ENCODE measurements at regions of chr3 and their contacts with region 1.

Region 1: DNA sequence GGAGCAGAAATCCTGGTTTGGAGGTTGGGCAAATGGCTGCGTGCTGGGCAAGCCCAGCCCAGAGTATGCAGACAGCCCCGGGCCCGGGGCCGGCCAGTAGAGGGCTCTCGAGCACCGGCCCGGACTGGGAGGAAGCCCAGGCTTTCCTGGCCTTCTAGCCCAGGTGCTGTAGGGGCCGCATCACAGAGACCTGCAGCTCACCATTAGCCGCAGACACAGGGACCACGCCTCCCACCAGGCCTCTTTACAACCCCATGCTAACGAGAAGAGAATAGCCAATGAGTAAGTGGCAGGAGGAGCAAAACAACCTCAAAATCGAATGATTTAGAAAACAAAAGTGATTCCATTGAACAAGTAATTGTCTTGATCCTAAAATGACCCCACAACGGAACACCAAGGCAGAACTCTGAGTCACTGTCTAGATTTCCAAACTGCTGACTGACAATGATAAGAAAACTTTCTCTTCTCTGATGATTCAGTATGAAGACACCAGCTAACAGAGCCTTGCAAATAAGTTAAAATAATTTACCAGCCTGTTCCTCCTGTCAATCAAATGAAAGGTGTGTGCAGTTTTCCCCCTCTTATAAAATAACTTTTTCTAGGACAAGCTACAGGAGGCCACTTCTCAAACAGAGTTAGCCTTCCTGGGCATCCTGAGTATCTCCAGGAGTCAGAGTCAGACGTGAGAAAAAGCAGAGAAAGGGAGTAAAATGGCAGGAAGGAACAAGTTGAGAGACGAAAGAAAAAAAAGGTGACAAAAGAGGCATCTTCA is 102.2 kb downstream of the DGKG start:
- DNase-seq: peak; percentile 75

Region 2: DNA sequence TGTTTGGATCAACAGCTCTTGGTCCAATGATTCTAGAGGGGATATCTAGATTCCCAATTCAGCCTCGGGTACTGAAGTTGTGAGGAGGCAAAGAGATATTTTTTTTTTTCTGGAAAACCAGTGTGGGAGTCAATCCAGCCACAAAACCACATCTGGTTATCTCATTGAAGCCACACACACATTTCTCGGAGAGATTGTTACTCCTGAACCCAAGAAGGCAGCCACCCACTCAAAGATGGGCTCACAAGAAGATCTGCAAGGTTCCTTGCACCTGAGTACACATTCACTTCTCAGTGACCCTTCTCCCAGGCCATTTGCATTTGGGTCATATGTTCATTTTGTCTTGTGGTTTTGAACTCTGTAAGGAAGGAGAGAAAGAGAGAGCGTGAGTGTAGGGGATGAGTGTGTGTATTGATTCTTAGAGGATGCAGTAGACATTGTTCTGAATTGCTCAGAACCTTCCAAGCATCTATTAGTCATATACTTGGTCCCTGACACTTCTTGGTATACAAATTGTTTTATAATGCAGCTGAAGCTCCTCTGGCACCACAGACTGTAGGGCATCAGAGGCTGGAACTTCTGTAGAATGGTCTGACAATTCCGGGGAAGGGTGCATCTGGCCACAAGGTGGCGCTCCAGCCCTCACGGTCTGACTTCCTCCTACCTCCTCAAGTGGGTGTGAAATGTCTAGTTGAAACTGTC is 282.7 kb before region 1 on chr3:
- CTCF ChIA-PET with region 1: interaction called, 12 read pairs
- POLR2A ChIA-PET with region 1: no interaction called
- DNase-seq: peak; percentile 65

Region 3: GRCh38 chr3:186142393-186142932 is 117.3 kb before region 1 on chr3:
- CTCF ChIA-PET with region 1: no interaction called
- POLR2A ChIA-PET with region 1: no interaction called
- DNase-seq: no peak

Region 4: DNA sequence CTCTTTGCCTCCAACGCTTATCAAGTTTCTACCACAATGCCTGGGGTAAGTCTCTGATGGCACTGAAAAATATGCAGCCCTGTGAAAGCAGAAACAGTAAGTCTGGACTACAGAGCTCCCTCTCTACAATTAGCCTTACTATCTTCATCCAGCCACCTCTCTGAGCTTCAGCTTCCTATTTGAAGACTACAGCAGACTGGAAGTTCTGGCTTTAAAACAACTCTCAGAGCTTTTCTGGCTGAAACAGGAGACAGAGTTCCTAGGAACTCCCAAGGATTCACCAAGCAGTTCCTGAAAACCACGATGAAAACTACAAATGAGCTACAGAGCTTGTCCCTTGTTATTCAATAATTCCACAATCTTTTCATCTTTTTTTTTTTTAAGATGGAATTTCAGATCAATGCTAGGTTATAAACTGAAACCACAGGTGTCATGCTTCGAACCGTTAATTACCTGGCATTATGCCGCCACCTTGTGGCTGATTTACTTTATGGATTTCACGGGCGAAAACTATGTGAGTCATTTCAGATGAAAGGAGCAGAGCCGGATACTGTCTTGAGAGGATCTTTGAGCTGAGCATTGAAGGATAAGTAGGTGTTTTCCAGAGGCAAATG is 280.5 kb after region 1 on chr3:
- CTCF ChIA-PET with region 1: interaction called, 13 read pairs
- POLR2A ChIA-PET with region 1: no interaction called
- DNase-seq: peak; percentile 34

Measured in HEK293T (cell line).